Left cardiac atrium (tissue), 4 donors: ENCODE measurements at regions of chr1 and their contacts with region 1.

Region 1: GRCh38 chr1:16078925-16079656 is 5.6 kb upstream of the FAM131C start:
- DNase-seq: peak; percentile 79
- ATAC-seq: peak; percentile 59 to 72

Region 2: DNA sequence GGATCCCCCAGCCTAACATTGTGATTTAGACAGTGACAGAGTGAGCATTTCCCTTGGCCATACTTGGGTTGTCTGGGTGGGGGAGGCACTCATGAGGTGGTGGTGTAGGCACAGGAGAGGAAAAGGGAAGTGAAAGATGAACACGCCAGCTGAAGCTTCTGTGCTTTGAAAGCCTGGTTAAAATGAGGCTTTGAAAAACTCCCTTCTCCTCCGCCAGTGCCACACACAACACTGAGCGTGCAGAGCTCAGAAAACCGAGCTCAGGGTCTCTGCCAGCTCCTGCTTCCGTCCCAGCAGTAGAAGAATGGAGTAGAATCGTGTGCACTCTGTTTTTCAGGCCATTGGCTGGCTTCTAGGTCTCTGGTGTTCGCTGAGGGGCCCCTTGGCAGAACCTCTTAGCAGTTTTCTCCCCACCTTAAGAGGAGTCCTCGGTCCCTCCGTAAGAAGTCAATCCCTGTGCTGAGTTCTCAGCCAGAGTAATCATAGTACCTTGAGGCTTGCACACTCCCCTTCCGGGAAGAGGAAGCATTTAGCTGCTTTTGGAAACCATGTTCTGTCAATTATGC is 382.1 kb before region 1 on chr1:
- intact Hi-C with region 1: no loop called
- DNase-seq: no peak
- ATAC-seq: peak; percentile 19 to 36

Region 3: GRCh38 chr1:15765495-15766194 is 313.4 kb before region 1 on chr1:
- intact Hi-C with region 1: no loop called
- DNase-seq: no peak
- ATAC-seq: no peak

Region 4: GRCh38 chr1:16155532-16156410 is 76.7 kb after region 1 on chr1 and contains the start of gene EPHA2:
- intact Hi-C with region 1: loop called in 1 of 2 experiments (anchors 2 kb)
- DNase-seq: peak; percentile 96
- ATAC-seq: peak; percentile 76 to 86
- total RNA-seq, gene EPHA2: 8.1 to 24.1 TPM

Region 5: DNA sequence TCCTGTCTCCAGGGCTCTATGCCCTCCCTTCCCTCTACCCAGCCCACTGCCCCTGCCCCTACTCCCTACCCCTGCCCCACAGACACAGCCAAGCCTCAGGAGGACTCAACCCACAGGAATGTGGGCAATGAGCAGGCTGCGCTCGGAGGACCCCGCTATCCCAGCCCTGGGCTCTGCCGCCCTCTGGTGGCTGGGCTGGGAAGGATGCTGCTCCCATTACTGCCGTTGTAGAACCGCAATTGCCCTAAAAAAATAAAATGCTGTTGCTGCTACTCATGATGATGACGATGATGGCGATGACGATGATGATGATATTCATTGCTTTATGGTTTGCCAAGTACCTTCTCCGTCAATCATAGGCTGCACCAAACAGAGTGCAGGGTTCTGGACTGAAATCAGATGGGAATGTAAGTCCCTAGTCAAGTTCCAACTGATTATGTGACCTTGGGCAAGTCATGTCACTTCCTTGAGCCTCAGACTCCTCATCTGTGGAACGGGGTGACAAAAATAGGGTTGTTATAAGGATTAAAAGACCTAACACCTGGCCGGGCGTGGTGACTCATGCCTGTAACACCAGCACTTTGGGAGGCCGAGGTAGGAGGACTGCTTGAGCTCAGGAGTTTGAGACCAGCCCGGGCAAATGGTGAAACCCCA is 108.8 kb after region 1 on chr1:
- intact Hi-C with region 1: loop called (anchors 1 to 2 kb)
- DNase-seq: peak; percentile 83
- ATAC-seq: peak; percentile 82 to 86

Region 6: DNA sequence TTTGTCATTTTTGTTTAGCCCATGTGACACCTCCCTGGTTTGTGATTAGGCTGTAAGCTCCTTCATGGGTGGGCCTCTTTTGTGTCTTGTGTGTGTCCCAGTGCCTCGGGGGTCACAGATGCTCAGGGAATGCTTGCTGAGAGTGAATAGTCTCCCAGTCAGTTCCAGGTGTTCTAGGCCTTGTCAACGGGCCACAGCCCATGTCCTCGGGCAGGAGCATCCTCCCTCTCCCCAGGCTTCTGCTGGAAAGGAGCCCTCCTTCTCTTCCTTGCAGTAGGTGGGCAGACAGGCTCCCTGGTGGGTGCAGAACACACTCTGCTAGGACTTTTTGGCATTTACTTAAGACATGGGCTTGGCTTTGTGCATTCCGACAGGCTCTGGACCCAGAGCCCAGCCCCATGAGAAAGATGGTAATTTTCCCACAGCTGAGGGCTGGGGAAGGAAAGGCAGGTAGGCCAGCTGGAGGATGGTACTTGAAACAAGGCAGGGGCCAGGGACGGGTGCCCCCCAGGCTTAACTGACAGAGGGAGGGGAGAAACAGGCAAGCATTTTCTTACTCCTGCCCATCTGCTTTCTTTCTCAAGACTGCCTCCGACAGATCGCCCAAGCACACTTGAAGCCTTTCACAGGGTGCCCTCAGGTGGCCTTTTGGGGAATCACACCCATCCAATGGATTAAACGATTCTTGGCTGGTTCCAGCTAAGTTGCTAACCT is 165.0 kb after region 1 on chr1:
- intact Hi-C with region 1: loop called in 1 of 2 experiments (anchors 5 kb)
- DNase-seq: peak; percentile 81
- ATAC-seq: peak; percentile 44 to 57

Region 7: GRCh38 chr1:16366722-16367257 is 287.7 kb after region 1 on chr1 and contains the start of gene SZRD1:
- intact Hi-C with region 1: loop called in 1 of 2 experiments (anchors 5 kb)
- DNase-seq: peak; percentile 96
- ATAC-seq: peak; percentile 93 to 94
- total RNA-seq, gene SZRD1: 98.0 to 112 TPM

Region 8: DNA sequence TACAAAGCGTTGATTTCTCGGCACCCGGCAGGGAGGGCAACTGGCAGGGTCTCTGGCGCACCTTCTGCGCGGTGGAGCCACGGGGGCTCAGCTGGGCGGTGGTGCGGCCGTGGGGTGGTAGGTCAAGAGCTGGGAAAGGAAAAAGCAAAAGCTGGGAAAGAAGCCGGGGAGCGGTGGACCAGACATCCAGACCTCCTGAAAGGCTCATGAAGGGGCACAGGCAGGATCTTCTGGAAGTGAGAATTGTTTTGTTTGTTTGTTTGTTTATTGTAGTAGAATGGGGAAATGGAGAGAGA is 442.1 kb after region 1 on chr1:
- intact Hi-C with region 1: no loop called
- DNase-seq: no peak
- ATAC-seq: no peak